ENCODE measurements at regions of chr10 and their contacts with region 1.

Region 1: DNA sequence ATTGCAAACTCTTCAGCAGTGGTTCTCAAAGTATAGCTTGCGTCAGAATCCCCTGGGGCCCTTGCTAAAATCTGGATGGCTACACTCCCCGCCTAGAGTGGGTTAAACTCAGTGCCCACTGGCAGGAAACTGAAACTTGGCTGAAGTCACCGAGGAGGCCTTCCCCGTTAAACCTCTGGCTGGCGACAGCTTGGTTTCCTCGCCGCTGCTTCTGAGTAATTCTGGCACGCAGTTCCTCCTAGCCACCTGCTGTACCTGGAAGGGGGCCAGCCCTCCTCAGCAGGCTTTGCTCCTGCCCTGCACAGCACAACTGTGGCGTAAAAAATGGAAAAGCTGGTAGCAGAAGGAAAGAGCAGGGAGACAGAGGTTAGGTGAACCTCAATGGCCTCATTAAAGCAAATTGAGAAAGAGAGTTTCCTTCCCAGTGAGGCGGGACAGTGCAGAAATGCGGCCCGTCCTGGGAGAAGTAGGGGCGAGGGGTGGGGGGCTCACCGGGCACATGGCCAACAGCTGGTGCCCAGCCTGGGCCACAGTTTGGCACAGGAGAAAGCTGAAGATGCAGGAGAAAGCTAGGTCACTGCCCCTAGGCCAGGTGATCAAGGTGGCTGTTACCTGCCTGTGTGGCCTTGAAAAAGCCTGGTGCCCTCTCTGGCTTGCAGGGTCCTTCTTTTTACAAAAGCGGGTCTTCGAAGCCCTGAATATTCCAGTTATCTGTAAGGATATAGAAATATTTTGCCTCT is 46.6 kb downstream of the ALOX5 start:
- DNase-seq: peak; percentile 82
- ATAC-seq: peak; percentile 50
- H3K4me3 Mint-ChIP-seq: peak overlapping the region; percentile 99
- H3K27ac Mint-ChIP-seq: peak overlapping the region; percentile 99
- H3K4me1 Mint-ChIP-seq: peaks cover 84% of the 10 kb centered on the region
- H3K27me3 Mint-ChIP-seq: peaks cover 4% of the 10 kb centered on the region

Region 2: DNA sequence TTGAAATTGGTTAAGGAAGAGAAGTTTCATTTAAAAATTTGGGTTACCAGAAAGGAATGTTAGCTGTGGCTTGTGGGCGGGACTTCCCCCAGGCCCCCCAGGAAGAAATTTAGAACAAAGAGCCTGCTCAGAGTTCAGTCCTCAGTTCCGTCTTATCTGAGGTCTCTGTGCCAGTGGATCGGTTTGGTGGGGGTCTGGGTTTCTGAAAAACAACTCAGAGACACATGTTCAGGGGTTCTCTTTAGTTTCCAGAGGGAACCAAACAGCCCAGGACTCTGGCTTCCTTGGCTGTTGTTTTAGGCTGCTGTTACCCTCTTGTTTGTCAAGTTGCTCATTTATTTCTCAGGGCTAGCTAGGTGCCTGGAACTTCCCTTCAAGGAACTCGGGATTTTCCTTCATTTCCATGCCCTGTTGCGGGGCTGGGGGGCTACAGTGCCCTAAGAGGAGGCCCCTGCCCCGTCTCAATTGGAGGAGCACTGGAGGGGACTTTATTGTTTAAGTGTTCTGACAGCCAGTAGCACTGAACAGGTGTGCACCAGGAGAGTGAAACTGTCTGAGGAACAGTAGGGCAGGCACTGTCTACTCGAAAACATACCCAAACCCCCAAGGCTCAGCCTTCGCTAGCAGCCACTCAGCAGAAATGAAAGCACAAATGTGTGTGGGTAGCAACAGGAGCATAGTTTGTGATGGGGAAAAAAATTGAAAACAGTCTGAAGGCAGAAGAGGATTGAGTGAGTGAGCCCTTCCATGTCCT is 13.3 kb after region 1 on chr10:
- CTCF ChIA-PET with region 1: interaction called, 5 read pairs
- POLR2A ChIA-PET with region 1: interaction called, 29 read pairs
- DNase-seq: no peak
- ATAC-seq: peak; percentile 83
- H3K4me3 Mint-ChIP-seq: peak overlapping the region; percentile 20
- H3K27ac Mint-ChIP-seq: peak overlapping the region; percentile 81
- H3K4me1 Mint-ChIP-seq: peaks cover 55% of the 10 kb centered on the region
- H3K27me3 Mint-ChIP-seq: no peaks in the 10 kb centered on the region

Region 3: GRCh38 chr10:45453639-45454255 is 33.1 kb after region 1 on chr10:
- CTCF ChIA-PET with region 1: interaction called, 4 read pairs
- POLR2A ChIA-PET with region 1: interaction called, 11 read pairs
- DNase-seq: no peak
- ATAC-seq: no peak
- H3K4me3 Mint-ChIP-seq: no peak overlapping the region
- H3K27ac Mint-ChIP-seq: peak overlapping the region; percentile 97
- H3K4me1 Mint-ChIP-seq: peaks cover 50% of the 10 kb centered on the region
- H3K27me3 Mint-ChIP-seq: no peaks in the 10 kb centered on the region

Region 4: GRCh38 chr10:45476559-45476958 is 55.9 kb after region 1 on chr10:
- CTCF ChIA-PET with region 1: no interaction called
- POLR2A ChIA-PET with region 1: no interaction called
- DNase-seq: no peak
- ATAC-seq: no peak
- H3K4me3 Mint-ChIP-seq: no peak overlapping the region
- H3K27ac Mint-ChIP-seq: no peak overlapping the region
- H3K4me1 Mint-ChIP-seq: no peaks in the 10 kb centered on the region
- H3K27me3 Mint-ChIP-seq: no peaks in the 10 kb centered on the region

Region 5: GRCh38 chr10:45653454-45653853 is 232.8 kb after region 1 on chr10:
- CTCF ChIA-PET with region 1: no interaction called
- POLR2A ChIA-PET with region 1: no interaction called
- DNase-seq: no peak
- ATAC-seq: no peak
- H3K4me3 Mint-ChIP-seq: no peak overlapping the region
- H3K27ac Mint-ChIP-seq: no peak overlapping the region
- H3K4me1 Mint-ChIP-seq: peaks cover 25% of the 10 kb centered on the region
- H3K27me3 Mint-ChIP-seq: no peaks in the 10 kb centered on the region